ENCODE measurements at regions of chr5 and their contacts with region 1.

Region 1: GRCh38 chr5:40410231-40410861 is 269.4 kb upstream of the PTGER4 start:
- DNase-seq: peak; percentile 65
- H3K4me3 Mint-ChIP-seq: peak overlapping the region; percentile 66
- H3K27ac Mint-ChIP-seq: peak overlapping the region; percentile 90
- H3K4me1 Mint-ChIP-seq: peaks cover 58% of the 10 kb centered on the region
- H3K27me3 Mint-ChIP-seq: no peaks in the 10 kb centered on the region

Region 2: DNA sequence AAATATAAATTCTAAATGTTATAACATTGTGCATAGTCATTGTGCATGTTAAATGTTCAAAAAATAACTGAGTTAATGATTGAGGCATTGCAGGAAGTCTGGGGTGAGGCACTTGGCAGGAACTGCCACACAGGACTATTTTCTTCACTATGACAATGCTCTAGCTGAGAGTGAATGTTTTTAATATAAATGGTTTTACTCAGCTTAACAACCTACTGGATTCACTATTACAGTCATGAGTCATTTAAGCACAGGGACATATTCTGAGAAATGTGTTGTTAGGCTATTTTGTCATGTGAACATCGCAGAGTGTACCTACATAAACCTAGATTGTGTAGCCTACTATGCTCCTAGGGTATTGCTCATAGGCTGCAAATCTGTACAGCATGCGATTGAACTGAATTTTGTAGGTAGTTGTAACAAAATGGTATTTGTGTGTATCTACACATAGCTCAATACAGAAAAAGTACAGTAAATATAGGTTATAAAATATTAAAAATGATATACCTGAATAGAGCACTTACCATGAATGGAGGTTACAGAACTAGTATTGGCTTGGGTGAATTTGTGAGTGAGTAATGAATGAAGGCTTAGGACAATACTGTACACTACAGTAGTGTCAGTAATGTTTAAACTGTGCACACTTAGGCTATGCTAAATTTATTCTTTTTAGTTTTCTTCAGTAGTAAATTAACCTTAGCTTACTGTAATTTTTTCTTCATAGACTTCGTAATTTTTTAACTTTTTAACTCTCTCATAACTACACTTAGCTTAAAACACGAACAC is 76.7 kb before region 1 on chr5:
- intact Hi-C with region 1: loop called (anchors 1 kb)
- DNase-seq: no peak
- H3K4me3 Mint-ChIP-seq: no peak overlapping the region
- H3K27ac Mint-ChIP-seq: peak overlapping the region; percentile 43
- H3K4me1 Mint-ChIP-seq: peaks cover 43% of the 10 kb centered on the region
- H3K27me3 Mint-ChIP-seq: no peaks in the 10 kb centered on the region

Region 3: GRCh38 chr5:40428126-40428525 is 17.8 kb after region 1 on chr5:
- intact Hi-C with region 1: loop called (anchors 1 kb)
- DNase-seq: no peak
- H3K4me3 Mint-ChIP-seq: no peak overlapping the region
- H3K27ac Mint-ChIP-seq: peak overlapping the region; percentile 76
- H3K4me1 Mint-ChIP-seq: peaks cover 49% of the 10 kb centered on the region
- H3K27me3 Mint-ChIP-seq: no peaks in the 10 kb centered on the region

Region 4: GRCh38 chr5:40437452-40437861 is 27.1 kb after region 1 on chr5:
- intact Hi-C with region 1: loop called (anchors 1 kb)
- DNase-seq: no peak
- H3K4me3 Mint-ChIP-seq: no peak overlapping the region
- H3K27ac Mint-ChIP-seq: peak overlapping the region; percentile 77
- H3K4me1 Mint-ChIP-seq: peaks cover 74% of the 10 kb centered on the region
- H3K27me3 Mint-ChIP-seq: no peaks in the 10 kb centered on the region

Region 5: GRCh38 chr5:40480392-40480791 is 70.0 kb after region 1 on chr5:
- intact Hi-C with region 1: loop called (anchors 1 kb)
- DNase-seq: peak; percentile 46
- H3K4me3 Mint-ChIP-seq: no peak overlapping the region
- H3K27ac Mint-ChIP-seq: peak overlapping the region; percentile 65
- H3K4me1 Mint-ChIP-seq: peaks cover 60% of the 10 kb centered on the region
- H3K27me3 Mint-ChIP-seq: no peaks in the 10 kb centered on the region

Region 6: DNA sequence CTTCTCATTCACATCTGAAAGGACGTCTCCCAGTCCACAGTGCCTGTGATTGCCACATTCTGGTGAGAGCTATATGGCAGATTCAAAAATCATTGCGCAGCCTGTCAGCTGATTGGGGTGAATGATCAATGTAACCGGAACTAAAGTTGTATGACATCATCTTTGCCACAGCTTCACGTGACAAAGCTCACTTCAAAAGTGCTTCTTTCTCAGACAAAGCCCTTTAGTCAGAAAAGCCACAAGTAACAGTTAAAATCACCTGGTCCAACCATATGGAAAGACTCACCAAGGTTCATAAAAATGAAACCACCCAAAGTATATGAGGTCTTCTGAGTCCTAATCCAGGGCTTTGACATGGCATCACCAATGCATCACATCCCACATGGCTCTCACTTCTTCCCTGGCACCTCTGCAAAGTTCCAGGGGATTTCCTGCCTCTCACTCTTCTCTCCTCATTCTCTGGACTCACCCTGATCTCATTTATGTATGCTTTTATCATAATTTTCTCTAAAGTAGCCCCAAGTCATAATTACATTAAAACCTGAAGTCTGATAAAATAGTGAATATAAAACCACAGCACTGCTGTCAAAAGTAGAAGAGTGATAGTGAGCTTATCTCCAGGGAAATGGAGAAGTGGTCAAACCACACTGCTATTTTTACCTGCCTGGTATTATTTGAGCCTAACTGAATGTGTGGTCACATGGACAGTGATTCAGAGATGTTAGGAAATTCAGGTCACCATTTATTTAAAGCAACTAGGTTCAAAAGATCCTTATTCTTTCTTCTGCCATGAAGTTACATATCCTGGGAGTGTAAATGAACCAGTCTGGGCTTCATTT is 76.3 kb after region 1 on chr5:
- intact Hi-C with region 1: loop called (anchors 1 kb)
- DNase-seq: peak; percentile 64
- H3K4me3 Mint-ChIP-seq: peak overlapping the region; percentile 19
- H3K27ac Mint-ChIP-seq: peak overlapping the region; percentile 75
- H3K4me1 Mint-ChIP-seq: peaks cover 78% of the 10 kb centered on the region
- H3K27me3 Mint-ChIP-seq: no peaks in the 10 kb centered on the region

Region 7: GRCh38 chr5:40736103-40736875 is 325.9 kb after region 1 on chr5:
- intact Hi-C with region 1: loop called (anchors 1 kb)
- DNase-seq: no peak
- H3K4me3 Mint-ChIP-seq: no peak overlapping the region
- H3K27ac Mint-ChIP-seq: peak overlapping the region; percentile 17
- H3K4me1 Mint-ChIP-seq: peaks cover 28% of the 10 kb centered on the region
- H3K27me3 Mint-ChIP-seq: no peaks in the 10 kb centered on the region

Measured in activated T-helper 2 cell treated with anti-CD3 and anti-CD28 coated beads, Interferon-gamma antibody, Interleukin-2, Interleukin-4, amounts not matched to agents 10 μg/mL and 5 μg/mL and 100 μg/mL, durations not matched to agents 14 hours and 24 hours and 36 hours (primary cell).